ENCODE measurements at regions of chr7 and their contacts with region 1.

Region 1: DNA sequence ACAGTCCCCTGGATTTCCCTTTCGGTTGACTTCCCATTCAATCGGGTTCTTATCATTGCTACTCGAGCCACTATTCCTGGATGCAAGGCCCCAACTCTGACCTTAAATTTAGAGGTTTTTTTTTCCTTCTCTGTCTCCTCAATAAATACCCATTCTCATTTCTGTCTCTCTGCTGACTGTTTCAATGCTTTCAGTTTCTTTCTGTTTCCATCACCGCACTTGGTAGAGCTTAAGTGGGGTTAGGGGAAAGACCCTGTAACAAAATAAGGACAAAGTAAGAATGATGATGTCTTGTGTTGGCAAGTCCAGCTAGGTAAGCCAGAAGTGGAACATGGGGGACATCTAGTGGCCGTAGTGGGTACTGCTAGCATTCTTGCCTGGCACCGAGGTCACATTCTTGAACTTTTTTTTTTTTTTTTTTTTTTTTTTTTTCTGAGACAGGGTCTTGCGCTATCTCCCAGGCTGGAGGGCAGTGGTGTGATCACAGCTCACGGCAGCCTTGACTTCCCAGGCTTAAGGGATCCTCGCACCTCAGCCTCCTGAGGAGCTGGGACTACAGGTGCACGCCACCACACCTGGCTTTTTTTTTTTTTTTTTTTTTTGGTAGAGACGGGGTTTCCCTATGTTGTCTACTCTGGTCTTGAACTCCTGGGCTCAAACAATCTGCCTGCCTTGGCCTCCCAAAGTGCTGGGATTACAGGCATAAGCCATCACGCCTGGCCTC is 40.3 kb downstream of the ZC3HC1 start:
- DNase-seq: peak; percentile 76 to 90
- ATAC-seq: peak; percentile 60 to 66
- H3K4me3 ChIP-seq: no peak overlapping the region
- H3K27ac ChIP-seq: peak overlapping the region; percentile 78 to 92
- H3K4me1 ChIP-seq: peaks cover 27% of the 10 kb centered on the region
- CTCF ChIP-seq: peak; percentile 95
- EP300 ChIP-seq: no peak
- POLR2A ChIP-seq: no peak
- RAD21 ChIP-seq: peak; percentile 91 to 98

Region 2: GRCh38 chr7:129664029-129665012 is 346.5 kb before region 1 on chr7:
- CTCF ChIA-PET with region 1: interaction called, 59 read pairs
- POLR2A ChIA-PET with region 1: no interaction called
- DNase-seq: peak; percentile 68 to 75
- ATAC-seq: peak; percentile 85 to 86
- H3K4me3 ChIP-seq: no peak overlapping the region
- H3K27ac ChIP-seq: peak overlapping the region; percentile 68 to 85
- H3K4me1 ChIP-seq: peaks cover 27% of the 10 kb centered on the region
- CTCF ChIP-seq: peak; percentile 87
- EP300 ChIP-seq: no peak
- POLR2A ChIP-seq: no peak
- RAD21 ChIP-seq: peak; percentile 84 to 90

Region 3: DNA sequence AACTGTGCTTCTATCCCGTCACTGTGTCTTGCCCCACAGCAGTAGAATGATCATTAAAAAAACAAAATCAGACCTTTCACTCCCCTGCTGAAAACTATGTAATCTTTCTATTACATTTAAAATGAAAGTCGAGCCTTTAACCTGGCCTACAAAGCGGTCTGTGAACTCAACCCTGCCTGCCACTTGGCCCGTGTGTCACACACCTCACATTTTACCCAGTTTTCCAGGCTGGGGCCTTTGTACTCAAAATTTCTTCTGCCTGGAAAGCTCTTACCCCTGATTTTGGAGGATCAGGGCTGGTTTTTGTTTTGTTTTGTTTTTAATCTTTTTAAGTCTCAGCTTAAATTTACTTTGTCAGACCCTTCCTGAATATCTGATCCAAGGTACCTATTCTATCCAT is 140.2 kb before region 1 on chr7:
- CTCF ChIA-PET with region 1: interaction called, 10 read pairs
- POLR2A ChIA-PET with region 1: no interaction called
- DNase-seq: no peak
- ATAC-seq: no peak
- H3K4me3 ChIP-seq: no peak overlapping the region
- H3K27ac ChIP-seq: no peak overlapping the region
- H3K4me1 ChIP-seq: peaks cover 20% of the 10 kb centered on the region
- CTCF ChIP-seq: no peak
- EP300 ChIP-seq: no peak
- POLR2A ChIP-seq: no peak
- RAD21 ChIP-seq: no peak

Region 4: DNA sequence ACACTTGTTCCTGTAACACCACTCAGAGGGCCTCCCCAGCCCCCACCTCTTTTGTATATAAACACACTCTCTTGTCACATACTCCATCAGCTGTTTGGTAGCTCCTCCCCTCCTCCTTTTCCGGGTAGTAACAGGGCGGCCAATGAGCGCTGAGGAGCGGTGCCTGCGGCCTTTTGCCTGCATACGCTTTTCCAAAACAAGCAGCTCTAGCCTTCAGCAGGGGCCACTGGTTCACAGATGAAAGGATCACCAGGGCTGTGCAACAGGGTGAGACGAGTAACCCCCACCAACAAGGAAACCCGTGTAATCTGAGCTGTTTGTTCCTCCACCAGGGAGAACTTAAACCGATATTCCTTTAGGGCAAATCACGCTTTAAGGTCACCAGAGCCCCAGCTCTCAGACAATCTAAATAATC is 62.0 kb before region 1 on chr7:
- CTCF ChIA-PET with region 1: interaction called, 21 read pairs
- POLR2A ChIA-PET with region 1: interaction called, 12 read pairs
- DNase-seq: peak; percentile 92 to 94
- ATAC-seq: peak; percentile 74 to 88
- H3K4me3 ChIP-seq: peak overlapping the region; percentile 73
- H3K27ac ChIP-seq: peak overlapping the region; percentile 83 to 95
- H3K4me1 ChIP-seq: peaks cover 32% of the 10 kb centered on the region
- CTCF ChIP-seq: no peak
- EP300 ChIP-seq: no peak
- POLR2A ChIP-seq: no peak
- RAD21 ChIP-seq: no peak; a peak in 2 of 5 replicates

Region 5: DNA sequence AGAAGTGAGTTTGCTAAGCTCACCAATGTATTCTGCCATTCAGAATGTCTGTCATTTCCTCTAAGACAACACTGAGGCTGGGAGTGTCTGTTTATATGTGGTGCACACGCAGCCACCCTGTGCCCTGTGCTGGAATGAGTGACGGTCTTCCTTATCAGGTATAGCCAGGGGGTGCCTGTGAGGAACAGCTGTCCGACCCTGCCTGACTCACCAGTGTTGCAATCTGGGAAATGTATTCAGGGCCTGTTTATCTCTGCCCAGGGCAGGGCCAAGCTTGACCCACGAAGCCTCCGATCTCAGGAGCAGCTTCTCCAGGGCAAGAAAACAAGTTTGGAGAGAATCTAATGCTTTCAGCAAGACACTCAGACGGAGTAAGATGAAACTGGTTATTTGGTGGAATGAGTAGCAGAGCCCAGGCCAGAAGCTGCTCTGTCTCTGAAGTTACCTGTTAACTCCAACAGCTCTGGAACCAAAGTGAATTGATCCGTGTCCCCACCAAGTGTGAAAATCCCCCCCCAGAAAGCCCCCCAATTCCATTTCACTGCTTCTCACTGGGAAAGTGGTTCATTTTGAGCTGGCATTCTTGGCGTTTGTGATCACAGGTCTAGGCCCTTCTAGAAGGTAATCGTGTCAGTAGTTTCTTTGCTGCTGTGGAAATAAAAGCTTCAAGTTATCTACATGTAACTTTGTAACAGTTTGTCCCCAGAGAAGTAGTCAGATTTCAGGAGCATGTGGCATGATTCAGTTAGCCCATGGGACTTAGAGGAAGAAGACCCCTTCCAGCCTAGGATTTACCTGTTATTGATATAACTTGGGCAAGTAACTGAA is 52.0 kb before region 1 on chr7:
- CTCF ChIA-PET with region 1: interaction called, 35 read pairs
- POLR2A ChIA-PET with region 1: interaction called, 4 read pairs
- DNase-seq: peak; percentile 90 to 92
- ATAC-seq: peak; percentile 97 to 99
- H3K4me3 ChIP-seq: no peak overlapping the region
- H3K27ac ChIP-seq: peak overlapping the region; percentile 87 to 88
- H3K4me1 ChIP-seq: peaks cover 34% of the 10 kb centered on the region
- CTCF ChIP-seq: no peak
- EP300 ChIP-seq: peak in 1 of 2 experiments; percentile 54; a peak in 1 of 5 replicates
- POLR2A ChIP-seq: no peak
- RAD21 ChIP-seq: peak in 1 of 2 experiments; percentile 39; a peak in 2 of 5 replicates

Region 6: DNA sequence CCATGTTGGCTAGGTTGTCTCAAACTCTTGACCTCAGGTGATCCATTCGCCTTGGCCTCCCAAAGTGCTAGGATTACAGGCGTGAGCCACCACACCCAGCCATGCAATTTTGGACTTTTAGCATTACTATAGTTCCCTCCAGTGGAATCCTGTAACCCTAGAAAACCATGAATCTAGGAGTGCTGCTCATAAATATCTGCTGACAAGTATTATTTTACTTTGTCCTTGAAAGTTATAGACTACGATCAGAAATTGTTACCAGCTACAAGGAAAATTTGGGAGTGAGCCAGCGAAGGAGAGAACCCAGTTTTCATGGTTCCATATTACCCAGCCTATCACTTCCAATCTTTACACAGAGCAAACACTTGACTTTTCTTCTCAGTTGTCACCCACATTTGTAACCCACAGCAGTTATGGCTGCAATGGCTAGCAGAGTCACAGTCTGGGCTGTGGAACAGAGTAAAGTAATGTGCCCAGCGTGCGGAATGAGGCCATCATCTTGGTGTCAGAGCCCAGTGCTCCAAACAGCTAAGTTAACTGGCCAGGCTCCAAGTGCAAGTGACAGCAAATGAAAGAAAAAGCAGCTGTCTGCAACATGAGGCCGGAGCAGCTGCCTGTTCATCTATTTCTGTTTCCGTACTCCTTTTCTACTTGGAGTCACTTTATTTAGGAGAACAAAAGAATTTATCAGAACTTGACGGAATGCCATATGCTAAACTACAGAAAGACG is 10.4 kb after region 1 on chr7:
- CTCF ChIA-PET with region 1: interaction called, 56 read pairs
- POLR2A ChIA-PET with region 1: no interaction called
- DNase-seq: no peak
- ATAC-seq: no peak
- H3K4me3 ChIP-seq: no peak overlapping the region
- H3K27ac ChIP-seq: no peak overlapping the region
- H3K4me1 ChIP-seq: peaks cover 13% of the 10 kb centered on the region
- CTCF ChIP-seq: no peak
- EP300 ChIP-seq: no peak
- POLR2A ChIP-seq: no peak
- RAD21 ChIP-seq: no peak

Region 7: DNA sequence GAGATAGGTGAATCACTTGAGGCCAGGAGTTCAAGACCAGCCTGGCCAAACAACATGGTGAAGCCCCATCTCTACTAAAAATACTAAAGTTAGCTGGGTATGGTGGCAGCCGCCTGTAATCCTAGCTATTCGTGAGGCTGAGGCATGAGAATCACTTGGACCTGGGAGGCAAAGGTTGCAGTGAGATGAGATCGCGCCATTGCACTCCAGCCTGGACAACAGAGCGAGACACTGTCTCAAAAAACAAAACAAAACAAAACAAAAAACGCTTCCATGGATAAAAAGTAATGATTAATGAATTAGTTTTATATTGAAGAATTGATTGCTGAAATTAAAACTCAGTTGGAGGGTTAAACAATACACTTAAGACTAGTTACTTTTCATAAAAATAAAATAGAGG is 91.7 kb after region 1 on chr7:
- CTCF ChIA-PET with region 1: no interaction called
- POLR2A ChIA-PET with region 1: no interaction called
- DNase-seq: no peak
- ATAC-seq: no peak
- H3K4me3 ChIP-seq: no peak overlapping the region
- H3K27ac ChIP-seq: no peak overlapping the region
- H3K4me1 ChIP-seq: no peaks in the 10 kb centered on the region
- CTCF ChIP-seq: no peak
- EP300 ChIP-seq: no peak
- POLR2A ChIP-seq: no peak
- RAD21 ChIP-seq: no peak